B cell (primary cell): ENCODE measurements at regions of chr14 and their contacts with region 1.

Region 1: GRCh38 chr14:75088574-75089373 is 19.3 kb downstream of the ZC2HC1C start:
- DNase-seq: peak; percentile 65
- ATAC-seq: peak; percentile 51
- H3K4me3 ChIP-seq: no peak overlapping the region
- H3K4me3 Mint-ChIP-seq: no peak overlapping the region
- H3K27ac ChIP-seq: no peak overlapping the region
- H3K27ac Mint-ChIP-seq: no peak overlapping the region
- H3K4me1 ChIP-seq: no peaks in the 10 kb centered on the region
- H3K4me1 Mint-ChIP-seq: no peaks in the 10 kb centered on the region
- H3K27me3 ChIP-seq: no peaks in the 10 kb centered on the region
- H3K27me3 Mint-ChIP-seq: no peaks in the 10 kb centered on the region
- CTCF ChIP-seq: peak; percentile 81

Region 2: GRCh38 chr14:74860906-74861733 is 227.7 kb before region 1 on chr14:
- CTCF ChIA-PET with region 1: interaction called, 144 read pairs
- POLR2A ChIA-PET with region 1: no interaction called
- intact Hi-C with region 1: loop called (anchors 1 kb)
- DNase-seq: peak; percentile 88
- ATAC-seq: peak; percentile 81
- H3K4me3 ChIP-seq: no peak overlapping the region
- H3K4me3 Mint-ChIP-seq: no peak overlapping the region
- H3K27ac ChIP-seq: no peak overlapping the region
- H3K27ac Mint-ChIP-seq: no peak overlapping the region
- H3K4me1 ChIP-seq: peaks cover 0 to 19% of the 10 kb centered on the region in 2 donors
- H3K4me1 Mint-ChIP-seq: peaks cover 9% of the 10 kb centered on the region
- H3K27me3 ChIP-seq: no peaks in the 10 kb centered on the region
- H3K27me3 Mint-ChIP-seq: no peaks in the 10 kb centered on the region
- CTCF ChIP-seq: peak; percentile 87

Region 3: DNA sequence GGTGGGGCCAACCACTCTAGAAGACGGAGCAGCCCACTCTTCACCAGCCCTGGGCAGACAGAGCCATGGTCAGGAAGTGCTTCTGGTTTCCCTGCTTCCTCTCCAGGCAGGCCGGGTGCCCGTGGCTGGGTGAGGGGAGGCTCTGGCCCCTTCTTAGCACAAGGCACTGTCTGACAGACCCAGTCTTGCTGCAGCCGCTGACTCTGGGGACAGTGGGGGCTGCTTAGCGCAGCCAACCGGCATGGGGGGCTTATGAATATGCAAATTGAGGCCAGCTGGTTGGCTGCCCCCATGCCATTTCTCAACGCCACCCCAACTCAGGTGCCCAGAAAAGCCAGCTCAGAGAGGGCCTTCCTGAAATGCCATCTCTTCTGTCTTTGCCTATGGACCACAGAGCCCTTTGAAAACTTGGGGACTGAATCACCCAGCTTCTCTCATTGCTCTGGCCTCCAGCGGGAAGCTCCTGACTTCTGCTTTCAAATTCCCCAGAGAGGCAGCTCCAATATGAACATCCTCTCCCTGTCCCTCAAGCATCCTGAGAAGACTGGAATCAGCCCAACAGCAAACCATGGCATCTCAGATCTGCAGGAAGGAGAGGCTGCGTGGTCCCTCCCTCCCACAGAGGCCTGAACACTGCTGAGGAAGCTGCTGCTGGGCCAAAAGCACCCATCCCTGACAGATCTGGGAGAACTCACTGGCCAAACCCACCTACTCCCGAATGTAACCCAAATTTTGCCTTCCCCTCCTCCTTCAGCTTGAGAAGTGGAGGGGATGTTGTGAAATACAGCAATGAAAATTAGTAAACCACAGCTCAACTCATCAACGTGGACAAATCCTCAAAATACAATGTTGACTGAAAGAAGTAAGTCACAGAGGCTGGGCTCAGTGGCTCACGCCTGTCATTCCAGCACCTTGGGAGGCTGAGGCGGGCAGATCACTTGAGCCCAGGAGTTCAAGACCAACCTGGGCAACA is 212.5 kb before region 1 on chr14 and contains the start of gene PROX2:
- CTCF ChIA-PET with region 1: interaction called, 11 read pairs
- POLR2A ChIA-PET with region 1: no interaction called
- intact Hi-C with region 1: no loop called
- DNase-seq: peak; percentile 37
- ATAC-seq: peak; percentile 51
- H3K4me3 ChIP-seq: peak within 1 kb of the TSS in 2 of 5 experiments; percentile 17 to 23
- H3K4me3 Mint-ChIP-seq: peak within 1 kb of the TSS; percentile 61
- H3K27ac ChIP-seq: no peak within 1 kb of the TSS
- H3K27ac Mint-ChIP-seq: peak within 1 kb of the TSS; percentile 46
- H3K4me1 ChIP-seq: peaks cover 19 to 23% of the 10 kb centered on the region in 2 donors
- H3K4me1 Mint-ChIP-seq: peaks cover 28% of the 10 kb centered on the region
- H3K27me3 ChIP-seq: no peaks in the 10 kb centered on the region
- H3K27me3 Mint-ChIP-seq: no peaks in the 10 kb centered on the region
- CTCF ChIP-seq: no peak
- total RNA-seq, gene PROX2: 0.07 TPM in 1 of 2 replicates, not detected in the other

Region 4: DNA sequence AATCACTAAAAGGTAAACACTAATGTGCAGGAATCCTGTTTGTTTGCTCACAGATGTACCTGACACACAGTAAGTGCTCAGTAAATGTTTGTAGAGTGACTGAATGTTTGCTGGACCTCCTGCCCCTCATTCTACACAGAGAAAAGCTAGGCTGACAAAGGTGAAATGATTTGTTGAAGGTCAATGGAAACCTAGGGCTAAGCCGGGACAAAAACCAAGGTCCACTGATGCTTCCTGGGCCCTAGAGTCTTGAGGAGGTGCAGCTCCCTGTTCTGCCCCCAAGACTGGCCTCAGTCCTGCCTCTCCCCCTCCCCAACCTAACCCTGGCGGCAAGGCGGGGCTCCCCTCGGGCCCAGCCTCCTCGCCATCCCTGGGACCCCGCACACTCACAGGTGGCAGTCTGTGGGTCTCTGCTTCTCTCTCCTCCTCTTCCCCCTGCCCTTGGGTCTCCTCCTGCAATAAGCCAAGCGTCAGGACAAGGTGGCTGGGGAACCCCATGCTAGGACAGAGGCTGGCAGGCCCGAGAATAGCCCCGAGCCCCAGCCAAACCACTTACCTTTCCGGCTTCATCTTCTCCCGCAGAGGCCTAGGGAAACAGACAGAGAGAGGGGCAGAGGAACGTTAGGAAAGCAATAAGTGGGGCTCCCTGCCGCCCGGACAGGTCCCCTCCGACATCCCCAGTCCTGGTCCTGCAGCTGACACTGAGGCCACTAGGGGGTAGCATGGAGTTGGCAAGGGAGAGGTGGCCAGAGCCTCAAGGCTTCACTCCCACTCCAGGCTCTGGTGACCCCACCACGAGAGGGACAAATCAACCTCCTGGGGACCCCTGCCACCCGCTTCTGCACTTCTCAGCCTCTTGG is 142.7 kb before region 1 on chr14:
- CTCF ChIA-PET with region 1: interaction called, 71 read pairs
- POLR2A ChIA-PET with region 1: no interaction called
- intact Hi-C with region 1: loop called (anchors 1 kb)
- DNase-seq: peak; percentile 80
- ATAC-seq: peak; percentile 71
- H3K4me3 ChIP-seq: no peak overlapping the region
- H3K4me3 Mint-ChIP-seq: peak overlapping the region; percentile 32
- H3K27ac ChIP-seq: no peak overlapping the region
- H3K27ac Mint-ChIP-seq: peak overlapping the region; percentile 72
- H3K4me1 ChIP-seq: peaks cover 31 to 35% of the 10 kb centered on the region in 2 donors
- H3K4me1 Mint-ChIP-seq: peaks cover 34% of the 10 kb centered on the region
- H3K27me3 ChIP-seq: no peaks in the 10 kb centered on the region
- H3K27me3 Mint-ChIP-seq: no peaks in the 10 kb centered on the region
- CTCF ChIP-seq: peak; percentile 97

Region 5: DNA sequence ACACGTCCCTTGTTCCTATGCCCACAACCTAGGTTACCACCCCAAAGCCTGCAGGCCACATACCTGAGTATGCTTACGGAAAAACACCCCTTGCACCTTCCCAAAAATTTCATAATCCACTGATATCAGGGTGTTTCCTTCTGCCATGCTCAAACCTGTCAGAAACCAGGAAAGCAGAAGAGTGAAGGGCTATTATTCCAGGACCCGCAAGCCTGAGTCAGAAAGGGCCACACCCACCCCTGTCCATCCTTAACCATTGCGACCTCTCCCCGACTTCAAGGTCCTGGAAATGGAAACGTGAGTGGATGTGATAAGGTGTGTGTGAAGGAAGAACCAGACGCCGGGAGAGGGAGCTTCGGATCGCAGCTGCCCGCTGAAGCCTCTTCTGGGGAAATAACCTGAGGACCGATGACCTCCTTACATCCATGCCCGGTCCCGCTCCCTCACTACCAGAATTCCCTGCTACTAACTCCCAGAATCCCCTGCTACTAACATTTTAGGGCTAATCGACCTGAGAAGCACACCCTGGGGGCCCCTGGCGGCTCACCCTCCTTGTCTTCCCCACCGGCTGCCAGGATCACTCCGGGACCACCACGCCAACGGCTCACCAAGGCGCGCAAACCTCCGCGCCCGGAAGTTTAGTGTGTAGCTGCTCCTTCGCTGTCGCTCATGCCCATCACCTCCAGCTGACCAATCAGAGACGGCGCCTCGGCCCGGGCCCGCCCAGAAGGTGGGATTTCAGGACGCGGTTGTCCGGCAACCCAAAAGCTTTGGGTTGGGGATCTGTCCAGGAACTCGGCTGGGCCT is 25.2 kb before region 1 on chr14 and contains the start of gene ACYP1:
- CTCF ChIA-PET with region 1: interaction called, 13 read pairs
- POLR2A ChIA-PET with region 1: no interaction called
- intact Hi-C with region 1: no loop called
- DNase-seq: peak; percentile 91
- ATAC-seq: peak; percentile 99
- H3K4me3 ChIP-seq: peak within 1 kb of the TSS; percentile 72 to 100 (median 96)
- H3K4me3 Mint-ChIP-seq: peak within 1 kb of the TSS; percentile 100
- H3K27ac ChIP-seq: peak within 1 kb of the TSS; percentile 65 to 73
- H3K27ac Mint-ChIP-seq: peak within 1 kb of the TSS; percentile 95
- H3K4me1 ChIP-seq: peaks cover 12 to 16% of the 10 kb centered on the region in 2 donors
- H3K4me1 Mint-ChIP-seq: peaks cover 20% of the 10 kb centered on the region
- H3K27me3 ChIP-seq: no peaks in the 10 kb centered on the region
- H3K27me3 Mint-ChIP-seq: no peaks in the 10 kb centered on the region
- CTCF ChIP-seq: no peak
- total RNA-seq, gene ACYP1: 34.1 and 46.7 TPM in 2 replicates

Region 6: DNA sequence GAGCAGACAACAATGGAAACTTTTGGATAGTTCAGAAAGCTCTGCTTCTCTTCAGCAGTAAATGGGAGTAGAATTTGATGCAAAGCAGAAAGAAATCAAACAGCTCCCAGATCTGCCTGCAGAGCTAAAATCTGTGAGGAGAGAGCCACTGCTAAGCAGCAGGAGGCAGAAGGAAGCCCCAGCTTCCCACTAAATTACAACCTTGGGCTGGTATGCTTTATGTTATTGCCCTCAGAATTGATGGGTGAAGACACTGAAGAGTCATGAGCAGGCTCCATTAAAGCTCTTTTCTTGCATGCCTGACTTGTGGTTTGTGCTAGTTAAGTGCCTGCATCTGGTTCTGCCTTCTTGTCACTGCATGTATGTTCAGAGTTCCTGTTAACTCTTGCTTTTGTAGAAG is 11.0 kb before region 1 on chr14:
- CTCF ChIA-PET with region 1: interaction called, 10 read pairs
- POLR2A ChIA-PET with region 1: no interaction called
- intact Hi-C with region 1: no loop called
- DNase-seq: no peak
- ATAC-seq: no peak
- H3K4me3 ChIP-seq: no peak overlapping the region
- H3K4me3 Mint-ChIP-seq: no peak overlapping the region
- H3K27ac ChIP-seq: no peak overlapping the region
- H3K27ac Mint-ChIP-seq: no peak overlapping the region
- H3K4me1 ChIP-seq: no peaks in the 10 kb centered on the region
- H3K4me1 Mint-ChIP-seq: no peaks in the 10 kb centered on the region
- H3K27me3 ChIP-seq: no peaks in the 10 kb centered on the region
- H3K27me3 Mint-ChIP-seq: no peaks in the 10 kb centered on the region
- CTCF ChIP-seq: no peak

Region 7: GRCh38 chr14:75155169-75155568 is 66.4 kb after region 1 on chr14:
- CTCF ChIA-PET with region 1: no interaction called
- POLR2A ChIA-PET with region 1: no interaction called
- intact Hi-C with region 1: no loop called
- DNase-seq: no peak
- ATAC-seq: no peak
- H3K4me3 ChIP-seq: no peak overlapping the region
- H3K4me3 Mint-ChIP-seq: no peak overlapping the region
- H3K27ac ChIP-seq: no peak overlapping the region
- H3K27ac Mint-ChIP-seq: no peak overlapping the region
- H3K4me1 ChIP-seq: peaks cover 0 to 5% of the 10 kb centered on the region in 2 donors
- H3K4me1 Mint-ChIP-seq: peaks cover 20% of the 10 kb centered on the region
- H3K27me3 ChIP-seq: no peaks in the 10 kb centered on the region
- H3K27me3 Mint-ChIP-seq: no peaks in the 10 kb centered on the region
- CTCF ChIP-seq: no peak

Region 8: DNA sequence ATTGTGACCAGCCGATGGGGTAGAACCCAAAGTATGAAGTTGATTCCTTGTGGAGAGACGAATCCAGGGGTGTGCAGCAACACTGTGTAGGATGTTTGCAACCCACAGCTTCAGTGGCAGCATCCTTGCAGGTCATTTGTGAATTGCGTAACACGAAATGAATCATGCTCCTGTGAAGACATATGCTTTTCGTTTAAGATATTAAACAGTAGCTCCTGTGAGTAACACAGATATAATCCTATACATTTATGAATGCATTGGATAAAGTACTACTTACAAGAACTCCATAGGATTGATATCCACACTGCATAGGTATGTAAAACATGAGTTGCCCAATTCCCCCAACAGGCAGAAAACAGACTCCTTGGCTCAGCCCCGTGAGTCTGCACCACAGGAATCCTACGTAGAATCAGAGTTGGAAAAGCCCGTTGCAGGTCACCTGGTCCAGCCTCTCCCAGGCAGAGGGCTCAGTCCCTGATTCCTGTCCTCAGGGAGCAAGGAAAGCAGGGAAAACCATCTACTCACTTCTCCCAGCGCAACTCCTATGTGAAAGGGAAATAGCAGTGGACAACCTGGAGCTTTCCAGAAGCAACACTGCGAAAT is 1138.8 kb after region 1 on chr14:
- CTCF ChIA-PET with region 1: no interaction called
- POLR2A ChIA-PET with region 1: no interaction called
- intact Hi-C with region 1: no loop called
- DNase-seq: no peak
- ATAC-seq: no peak
- H3K4me3 ChIP-seq: no peak overlapping the region
- H3K4me3 Mint-ChIP-seq: no peak overlapping the region
- H3K27ac ChIP-seq: no peak overlapping the region
- H3K27ac Mint-ChIP-seq: no peak overlapping the region
- H3K4me1 ChIP-seq: no peaks in the 10 kb centered on the region
- H3K4me1 Mint-ChIP-seq: no peaks in the 10 kb centered on the region
- H3K27me3 ChIP-seq: no peaks in the 10 kb centered on the region
- H3K27me3 Mint-ChIP-seq: no peaks in the 10 kb centered on the region
- CTCF ChIP-seq: no peak